ENCODE measurements at regions of chrX and their contacts with region 1.

Region 1: GRCh38 chrX:24371391-24371972 is 11.0 kb downstream of the SUPT20HL1 start:
- DNase-seq: peak; percentile 66
- H3K4me3 Mint-ChIP-seq: peak overlapping the region; percentile 23
- H3K27ac Mint-ChIP-seq: no peak overlapping the region
- H3K4me1 Mint-ChIP-seq: peaks cover 10% of the 10 kb centered on the region
- H3K27me3 Mint-ChIP-seq: peaks cover 2% of the 10 kb centered on the region

Region 2: GRCh38 chrX:24259544-24260240 is 111.8 kb before region 1 on chrX:
- CTCF ChIA-PET with region 1: interaction called, 18 read pairs
- POLR2A ChIA-PET with region 1: no interaction called
- intact Hi-C with region 1: loop called (anchors 2 kb)
- DNase-seq: peak; percentile 12
- H3K4me3 Mint-ChIP-seq: no peak overlapping the region
- H3K27ac Mint-ChIP-seq: no peak overlapping the region
- H3K4me1 Mint-ChIP-seq: peaks cover 12% of the 10 kb centered on the region
- H3K27me3 Mint-ChIP-seq: no peaks in the 10 kb centered on the region

Region 3: GRCh38 chrX:24357106-24357505 is 14.4 kb before region 1 on chrX:
- CTCF ChIA-PET with region 1: interaction called, 11 read pairs
- POLR2A ChIA-PET with region 1: no interaction called
- intact Hi-C with region 1: no loop called
- DNase-seq: no peak
- H3K4me3 Mint-ChIP-seq: no peak overlapping the region
- H3K27ac Mint-ChIP-seq: no peak overlapping the region
- H3K4me1 Mint-ChIP-seq: no peaks in the 10 kb centered on the region
- H3K27me3 Mint-ChIP-seq: no peaks in the 10 kb centered on the region

Region 4: GRCh38 chrX:24426921-24427746 is 55.7 kb after region 1 on chrX:
- CTCF ChIA-PET with region 1: no interaction called
- POLR2A ChIA-PET with region 1: no interaction called
- intact Hi-C with region 1: no loop called
- DNase-seq: no peak
- H3K4me3 Mint-ChIP-seq: no peak overlapping the region
- H3K27ac Mint-ChIP-seq: no peak overlapping the region
- H3K4me1 Mint-ChIP-seq: no peaks in the 10 kb centered on the region
- H3K27me3 Mint-ChIP-seq: no peaks in the 10 kb centered on the region

Region 5: DNA sequence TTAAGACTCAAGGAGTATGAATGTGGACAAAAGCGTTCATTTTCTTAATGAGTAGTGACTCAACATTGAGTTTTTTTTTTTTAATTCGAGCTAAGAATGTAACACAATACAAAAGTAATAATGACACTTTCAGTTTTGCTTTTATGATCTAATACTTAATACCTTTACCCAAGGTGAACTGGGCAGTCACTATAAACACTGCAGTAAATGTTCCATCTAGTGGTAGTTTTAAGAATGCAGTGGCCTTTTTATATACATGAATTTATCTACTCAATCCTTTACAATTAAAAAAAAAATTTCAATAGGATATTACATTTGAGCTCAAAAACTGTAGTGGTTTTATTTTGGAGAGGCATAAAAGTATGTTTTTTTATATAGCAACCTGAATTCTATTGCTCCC is 127.5 kb after region 1 on chrX:
- CTCF ChIA-PET with region 1: interaction called, 29 read pairs
- POLR2A ChIA-PET with region 1: no interaction called
- intact Hi-C with region 1: no loop called
- DNase-seq: no peak
- H3K4me3 Mint-ChIP-seq: no peak overlapping the region
- H3K27ac Mint-ChIP-seq: no peak overlapping the region
- H3K4me1 Mint-ChIP-seq: peaks cover 24% of the 10 kb centered on the region
- H3K27me3 Mint-ChIP-seq: no peaks in the 10 kb centered on the region

Region 6: DNA sequence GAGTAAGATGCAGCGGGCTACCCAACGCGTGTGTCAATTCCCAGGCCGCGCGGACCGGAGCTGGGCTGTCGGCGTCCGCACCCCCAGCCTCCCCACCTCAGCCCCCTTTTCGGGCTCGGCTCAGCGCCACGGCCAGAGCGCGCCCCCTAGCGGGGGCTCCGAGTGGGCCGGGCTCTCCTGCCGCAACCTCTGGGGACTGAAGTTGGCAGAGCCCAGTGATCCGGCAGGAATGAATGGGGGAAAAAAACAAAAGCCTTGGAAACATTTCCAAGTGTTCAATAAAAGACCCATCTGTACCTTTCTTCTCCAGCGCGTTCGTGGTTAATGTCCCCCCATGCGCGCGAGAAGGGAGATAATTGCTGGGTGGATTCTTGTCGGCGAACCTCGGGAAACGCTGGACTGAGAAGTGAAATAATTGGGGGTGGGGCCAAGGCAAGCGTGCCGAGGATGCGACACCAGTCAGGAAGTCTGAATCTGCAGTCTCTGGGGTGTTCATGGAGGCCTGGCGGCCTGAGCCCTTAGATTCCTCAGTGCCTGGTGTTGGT is 649.5 kb after region 1 on chrX:
- CTCF ChIA-PET with region 1: interaction called, 6 read pairs
- POLR2A ChIA-PET with region 1: no interaction called
- intact Hi-C with region 1: loop called (anchors 5 kb)
- DNase-seq: peak; percentile 42
- H3K4me3 Mint-ChIP-seq: no peak overlapping the region
- H3K27ac Mint-ChIP-seq: no peak overlapping the region
- H3K4me1 Mint-ChIP-seq: peaks cover 27% of the 10 kb centered on the region
- H3K27me3 Mint-ChIP-seq: peaks cover 58% of the 10 kb centered on the region